CD4-positive, alpha-beta T cell (primary cell): ENCODE measurements at regions of chr22 and their contacts with region 1.

Region 1: GRCh38 chr22:17057959-17058814 is 26.6 kb upstream of the IL17RA start:
- DNase-seq: peak; percentile 7 to 70 (median 32)
- ATAC-seq: peak; percentile 51
- H3K4me3 ChIP-seq: no peak overlapping the region
- H3K4me3 Mint-ChIP-seq: no peak overlapping the region
- H3K27ac ChIP-seq: no peak overlapping the region
- H3K27ac Mint-ChIP-seq: no peak overlapping the region
- H3K4me1 ChIP-seq: peaks cover 5% of the 10 kb centered on the region
- H3K4me1 Mint-ChIP-seq: peaks cover under 1% of the 10 kb centered on the region
- H3K27me3 ChIP-seq: peaks cover 0 to 3% of the 10 kb centered on the region in 2 experiments
- H3K27me3 Mint-ChIP-seq: no peaks in the 10 kb centered on the region
- CTCF ChIP-seq: peak; percentile 86

Region 2: GRCh38 chr22:16917144-16918003 is 140.8 kb before region 1 on chr22:
- CTCF ChIA-PET with region 1: no interaction called
- POLR2A ChIA-PET with region 1: no interaction called
- intact Hi-C with region 1: loop called (anchors 2 kb)
- DNase-seq: peak; percentile 9 to 61 (median 36)
- ATAC-seq: no peak
- H3K4me3 ChIP-seq: no peak overlapping the region
- H3K4me3 Mint-ChIP-seq: no peak overlapping the region
- H3K27ac ChIP-seq: no peak overlapping the region
- H3K27ac Mint-ChIP-seq: no peak overlapping the region
- H3K4me1 ChIP-seq: no peaks in the 10 kb centered on the region
- H3K4me1 Mint-ChIP-seq: no peaks in the 10 kb centered on the region
- H3K27me3 ChIP-seq: peaks cover 5 to 19% of the 10 kb centered on the region in 2 experiments
- H3K27me3 Mint-ChIP-seq: peaks cover 61% of the 10 kb centered on the region
- CTCF ChIP-seq: peak; percentile 45

Region 3: GRCh38 chr22:17084554-17085276 is 26.5 kb after region 1 on chr22 and contains the start of gene IL17RA:
- CTCF ChIA-PET with region 1: no interaction called
- POLR2A ChIA-PET with region 1: no interaction called
- intact Hi-C with region 1: no loop called
- DNase-seq: peak; percentile 87 to 98 (median 95)
- ATAC-seq: peak; percentile 86
- H3K4me3 ChIP-seq: peak within 1 kb of the TSS; percentile 82
- H3K4me3 Mint-ChIP-seq: peak within 1 kb of the TSS; percentile 97
- H3K27ac ChIP-seq: peak within 1 kb of the TSS; percentile 68 to 93
- H3K27ac Mint-ChIP-seq: peak within 1 kb of the TSS; percentile 88
- H3K4me1 ChIP-seq: peaks cover 49% of the 10 kb centered on the region
- H3K4me1 Mint-ChIP-seq: peaks cover 48% of the 10 kb centered on the region
- H3K27me3 ChIP-seq: no peaks in the 10 kb centered on the region
- H3K27me3 Mint-ChIP-seq: no peaks in the 10 kb centered on the region
- CTCF ChIP-seq: no peak
- total RNA-seq, gene IL17RA: 23.2 to 24.3 TPM